ENCODE measurements at regions of chr10 and their contacts with region 1.

Region 1: GRCh38 chr10:90871766-90872647 is at the start of gene RPP30:
- DNase-seq: peak; percentile 77 to 86 (median 82)
- ATAC-seq: peak; percentile 100
- H3K4me3 ChIP-seq: peak within 1 kb of the TSS; percentile 95
- H3K27ac ChIP-seq: peak within 1 kb of the TSS; percentile 71
- H3K4me1 ChIP-seq: peaks cover 0 to 7% of the 10 kb centered on the region in 2 experiments; a peak in 1 of 5 replicates
- H3K27me3 ChIP-seq: no peaks in the 10 kb centered on the region
- CTCF ChIP-seq: no peak
- EP300 ChIP-seq: no peak
- POLR2A ChIP-seq: peak; percentile 77
- RAD21 ChIP-seq: no peak
- polyA plus RNA-seq, gene RPP30: 166 to 170 TPM

Region 2: GRCh38 chr10:89426230-89426868 is 1445.7 kb before region 1 on chr10:
- CTCF ChIA-PET with region 1: no interaction called
- POLR2A ChIA-PET with region 1: no interaction called
- in situ Hi-C with region 1: loop called (anchors 25 kb)
- intact Hi-C with region 1: no loop called
- DNase-seq: peak in 2 of 4 experiments; percentile 32 to 46
- ATAC-seq: peak; percentile 84
- H3K4me3 ChIP-seq: no peak overlapping the region
- H3K27ac ChIP-seq: no peak overlapping the region
- H3K4me1 ChIP-seq: no peaks in the 10 kb centered on the region
- H3K27me3 ChIP-seq: peaks cover 0 to 3% of the 10 kb centered on the region in 2 experiments; a peak in 2 of 5 replicates
- CTCF ChIP-seq: peak; percentile 41 to 73 (median 52); a peak in 4 of 6 replicates
- EP300 ChIP-seq: no peak
- POLR2A ChIP-seq: no peak
- RAD21 ChIP-seq: peak; percentile 68 to 81

Region 3: DNA sequence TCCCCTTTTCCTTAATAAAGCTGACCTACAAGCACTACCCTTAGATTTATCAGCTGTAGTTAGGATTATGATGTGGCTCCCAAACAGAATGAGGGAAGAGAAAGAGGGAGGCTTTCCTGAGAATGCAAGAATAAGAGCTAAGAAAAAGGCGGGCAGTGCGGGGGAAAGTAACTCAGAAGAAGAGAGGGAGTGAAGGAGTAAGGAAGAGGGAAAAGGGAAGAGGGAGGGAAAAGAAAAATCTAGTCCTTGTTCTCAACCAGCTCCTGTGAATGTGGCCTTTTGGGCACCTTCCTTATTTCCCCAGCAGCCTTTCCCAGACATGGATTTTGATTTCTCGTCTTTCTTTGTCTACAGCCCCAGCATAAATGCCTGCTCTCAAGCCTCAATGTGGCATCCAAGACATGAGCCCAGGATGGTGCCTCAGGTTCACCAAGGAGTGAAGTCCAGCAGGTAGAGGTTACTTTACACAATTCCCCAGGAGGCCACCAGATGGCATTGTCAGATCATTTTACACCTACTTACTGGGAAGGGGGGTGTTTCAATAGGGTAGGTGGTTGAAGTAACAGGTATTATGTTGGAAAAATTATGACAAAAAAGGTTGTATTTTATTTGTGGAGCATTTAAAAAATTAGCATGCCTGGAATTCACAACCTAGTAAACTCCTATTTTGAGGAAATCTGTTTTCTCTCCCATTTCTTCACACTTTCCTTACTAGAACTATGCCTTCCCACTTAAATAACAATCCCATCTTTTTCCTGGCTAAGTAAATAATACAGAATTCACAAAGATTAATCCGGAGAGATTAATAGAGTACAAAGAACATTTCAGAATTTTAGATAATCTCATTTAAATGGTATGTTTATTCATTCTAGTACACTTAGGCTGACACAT is 120.7 kb before region 1 on chr10:
- CTCF ChIA-PET with region 1: no interaction called
- POLR2A ChIA-PET with region 1: no interaction called
- in situ Hi-C with region 1: no loop called
- intact Hi-C with region 1: loop called (anchors 2 kb)
- DNase-seq: peak; percentile 32 to 58 (median 38)
- ATAC-seq: peak; percentile 86
- H3K4me3 ChIP-seq: no peak overlapping the region
- H3K27ac ChIP-seq: no peak overlapping the region
- H3K4me1 ChIP-seq: no peaks in the 10 kb centered on the region
- H3K27me3 ChIP-seq: no peaks in the 10 kb centered on the region
- CTCF ChIP-seq: peak; percentile 44 to 65 (median 57); a peak in 5 of 6 replicates
- EP300 ChIP-seq: no peak
- POLR2A ChIP-seq: no peak
- RAD21 ChIP-seq: peak; percentile 54 to 68

Region 4: DNA sequence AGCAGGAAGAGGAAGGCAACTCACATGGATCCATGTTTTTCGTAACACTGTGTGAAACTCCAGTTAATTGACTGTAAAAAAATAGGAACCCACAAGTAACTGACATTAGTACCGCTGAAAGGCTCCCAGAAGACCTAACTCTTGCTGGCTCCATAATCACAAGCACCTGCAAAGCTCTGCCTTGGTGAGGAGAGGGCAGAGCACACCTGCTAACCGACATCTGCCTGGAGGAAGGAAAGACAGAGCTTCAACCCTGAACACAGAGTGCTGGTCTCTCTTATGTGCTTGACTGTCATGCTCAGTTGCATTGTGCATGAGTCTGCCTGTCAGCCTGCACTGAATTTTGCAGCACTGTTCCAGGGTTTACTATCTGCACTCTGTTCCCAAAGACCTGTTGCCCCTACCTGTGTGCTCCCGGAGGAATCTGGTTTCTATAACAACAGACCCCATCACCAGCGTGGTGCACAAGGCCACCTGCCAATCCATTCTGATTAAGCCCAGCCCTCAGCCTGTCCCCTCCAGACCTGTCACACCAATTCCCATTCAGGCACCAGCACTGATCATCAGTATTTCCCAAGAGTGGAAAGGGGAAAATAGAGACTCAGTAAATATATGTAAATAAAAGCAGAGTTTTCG is 112.0 kb after region 1 on chr10:
- CTCF ChIA-PET with region 1: no interaction called
- POLR2A ChIA-PET with region 1: no interaction called
- in situ Hi-C with region 1: no loop called
- intact Hi-C with region 1: no loop called
- DNase-seq: no peak
- ATAC-seq: no peak
- H3K4me3 ChIP-seq: no peak overlapping the region
- H3K27ac ChIP-seq: no peak overlapping the region
- H3K4me1 ChIP-seq: no peaks in the 10 kb centered on the region
- H3K27me3 ChIP-seq: peaks cover 0 to 5% of the 10 kb centered on the region in 2 experiments; a peak in 2 of 5 replicates
- CTCF ChIP-seq: no peak
- EP300 ChIP-seq: no peak
- POLR2A ChIP-seq: no peak
- RAD21 ChIP-seq: no peak

Measured in K562 (cell line).